ENCODE measurements at regions of chr2 and their contacts with region 1.

Region 1: DNA sequence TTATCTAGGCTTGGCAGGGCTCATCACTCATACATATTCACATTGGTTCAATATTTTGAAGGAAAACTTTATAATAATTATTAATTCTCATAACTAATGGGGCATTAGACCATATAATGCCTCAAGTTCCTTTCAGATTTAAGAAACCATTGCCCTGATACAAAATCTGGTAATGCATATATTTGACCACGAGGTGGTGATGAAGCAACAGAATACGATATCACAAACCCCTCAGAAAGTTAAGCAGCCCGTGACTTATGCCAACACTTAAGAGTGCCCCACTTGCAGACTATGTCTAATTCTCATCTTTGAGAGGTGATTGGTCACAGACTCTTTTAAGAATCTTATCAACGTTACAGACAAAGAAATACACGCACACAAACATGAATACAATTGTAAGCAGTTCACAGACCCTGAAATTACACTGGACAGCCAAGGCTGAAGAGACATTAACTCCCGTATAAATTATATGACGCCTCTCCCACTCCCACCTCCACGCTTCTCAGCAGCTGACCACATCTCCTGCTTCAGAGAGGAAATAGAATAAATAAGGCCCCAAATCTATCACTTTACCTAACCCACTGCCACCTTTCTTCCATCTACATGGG is 20.7 kb upstream of the DNAH6 start:
- DNase-seq: no peak
- H3K4me3 Mint-ChIP-seq: no peak overlapping the region
- H3K27ac Mint-ChIP-seq: no peak overlapping the region
- H3K4me1 Mint-ChIP-seq: peaks cover 17% of the 10 kb centered on the region
- H3K27me3 Mint-ChIP-seq: no peaks in the 10 kb centered on the region

Region 2: GRCh38 chr2:84539729-84540128 is 44.1 kb after region 1 on chr2:
- CTCF ChIA-PET with region 1: no interaction called
- POLR2A ChIA-PET with region 1: no interaction called
- intact Hi-C with region 1: no loop called
- DNase-seq: no peak
- H3K4me3 Mint-ChIP-seq: no peak overlapping the region
- H3K27ac Mint-ChIP-seq: no peak overlapping the region
- H3K4me1 Mint-ChIP-seq: peaks cover 14% of the 10 kb centered on the region
- H3K27me3 Mint-ChIP-seq: no peaks in the 10 kb centered on the region

Region 3: DNA sequence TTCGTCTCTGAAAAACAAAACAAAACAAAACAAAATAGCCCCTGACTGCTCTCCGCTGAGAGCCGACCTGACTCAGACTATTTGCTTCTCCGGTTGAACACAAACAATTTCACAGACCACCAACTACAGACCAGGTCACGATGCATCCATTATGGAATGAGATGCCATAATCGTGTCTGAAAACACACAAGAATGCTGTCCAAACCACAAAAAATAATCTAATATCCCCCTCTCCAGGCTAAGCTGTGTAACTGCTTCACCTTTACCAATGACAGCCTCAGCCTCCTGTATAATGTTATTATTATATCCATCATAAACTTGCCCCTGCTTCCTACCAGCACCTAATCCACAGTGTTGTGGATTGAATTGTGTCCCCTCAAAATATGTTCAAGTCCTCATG is 135.4 kb after region 1 on chr2:
- CTCF ChIA-PET with region 1: interaction called, 4 read pairs
- POLR2A ChIA-PET with region 1: no interaction called
- intact Hi-C with region 1: loop called (anchors 1 kb)
- DNase-seq: no peak
- H3K4me3 Mint-ChIP-seq: no peak overlapping the region
- H3K27ac Mint-ChIP-seq: no peak overlapping the region
- H3K4me1 Mint-ChIP-seq: peaks cover 13% of the 10 kb centered on the region
- H3K27me3 Mint-ChIP-seq: no peaks in the 10 kb centered on the region